ENCODE measurements at regions of chr1 and their contacts with region 1.

Region 1: DNA sequence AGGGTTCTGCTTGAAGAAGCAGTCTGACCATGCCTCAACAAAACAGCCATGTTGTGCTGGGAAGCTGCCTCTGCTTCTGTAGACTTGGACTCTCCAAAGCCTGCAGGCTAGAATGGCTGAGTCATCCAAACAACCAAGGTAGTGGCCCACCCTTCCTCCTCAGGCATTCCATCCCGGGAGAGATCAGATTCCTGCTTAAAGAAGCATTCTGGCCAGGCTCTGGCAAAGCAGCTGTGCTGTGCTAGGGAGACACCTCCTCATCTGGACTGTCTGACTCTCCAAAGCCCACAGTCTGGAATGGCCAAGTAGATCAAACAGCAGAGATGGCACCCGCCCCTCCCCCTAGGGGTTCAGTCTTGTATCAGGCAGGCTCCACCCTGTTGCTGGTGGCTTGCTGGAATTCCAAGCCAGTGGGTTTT is 38.3 kb upstream of the F3 start:
- DNase-seq: peak in 1 of 2 donors; percentile 55
- ATAC-seq: peak; percentile 62
- H3K4me3 ChIP-seq: no peak overlapping the region
- H3K27ac ChIP-seq: peak overlapping the region in 1 of 2 donors; percentile 7
- H3K4me1 ChIP-seq: peaks cover 5 to 11% of the 10 kb centered on the region in 2 donors
- H3K27me3 ChIP-seq: no peaks in the 10 kb centered on the region

Region 2: DNA sequence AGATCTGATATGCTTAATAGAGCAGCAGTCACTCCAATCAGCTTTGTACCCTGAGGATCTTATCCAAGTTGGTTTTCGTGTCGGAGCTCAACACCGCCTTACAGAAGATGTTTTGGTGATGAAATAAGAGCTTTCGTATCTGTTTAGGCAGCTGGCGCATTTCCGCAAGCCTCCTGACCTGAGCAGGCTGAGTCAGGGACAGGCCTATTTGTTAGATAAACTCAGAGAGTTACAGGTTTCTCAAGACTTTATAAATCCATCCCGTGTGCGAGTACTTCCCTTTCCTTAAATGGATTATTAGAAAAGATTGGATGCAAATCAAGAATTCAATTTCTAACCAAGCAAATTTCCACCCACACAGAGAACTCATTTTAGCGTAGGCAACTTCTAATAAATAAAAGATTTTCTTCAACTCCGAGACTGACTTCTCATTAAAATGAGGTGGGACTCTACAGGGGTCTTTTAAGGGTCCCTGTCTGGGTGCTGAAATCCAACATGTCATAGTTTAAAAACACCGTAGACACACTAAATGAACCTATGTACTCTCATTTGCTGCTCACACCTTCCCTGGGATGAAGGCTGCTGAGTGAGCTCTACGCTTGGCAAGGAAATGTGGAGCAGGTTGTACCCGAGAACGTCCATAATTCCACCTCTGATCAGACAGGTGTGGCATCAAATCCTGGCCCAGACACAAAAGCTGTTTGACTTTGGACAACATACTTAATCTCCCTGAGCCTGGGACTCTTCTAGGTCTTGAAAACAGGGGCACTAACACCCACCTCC is 68.5 kb after region 1 on chr1:
- intact Hi-C with region 1: loop called in 1 of 2 experiments (anchors 2 kb)
- DNase-seq: peak; percentile 87 to 88
- ATAC-seq: peak; percentile 79
- H3K4me3 ChIP-seq: no peak overlapping the region
- H3K27ac ChIP-seq: peak overlapping the region; percentile 45 to 64
- H3K4me1 ChIP-seq: peaks cover 0 to 6% of the 10 kb centered on the region in 2 donors
- H3K27me3 ChIP-seq: no peaks in the 10 kb centered on the region

Region 3: DNA sequence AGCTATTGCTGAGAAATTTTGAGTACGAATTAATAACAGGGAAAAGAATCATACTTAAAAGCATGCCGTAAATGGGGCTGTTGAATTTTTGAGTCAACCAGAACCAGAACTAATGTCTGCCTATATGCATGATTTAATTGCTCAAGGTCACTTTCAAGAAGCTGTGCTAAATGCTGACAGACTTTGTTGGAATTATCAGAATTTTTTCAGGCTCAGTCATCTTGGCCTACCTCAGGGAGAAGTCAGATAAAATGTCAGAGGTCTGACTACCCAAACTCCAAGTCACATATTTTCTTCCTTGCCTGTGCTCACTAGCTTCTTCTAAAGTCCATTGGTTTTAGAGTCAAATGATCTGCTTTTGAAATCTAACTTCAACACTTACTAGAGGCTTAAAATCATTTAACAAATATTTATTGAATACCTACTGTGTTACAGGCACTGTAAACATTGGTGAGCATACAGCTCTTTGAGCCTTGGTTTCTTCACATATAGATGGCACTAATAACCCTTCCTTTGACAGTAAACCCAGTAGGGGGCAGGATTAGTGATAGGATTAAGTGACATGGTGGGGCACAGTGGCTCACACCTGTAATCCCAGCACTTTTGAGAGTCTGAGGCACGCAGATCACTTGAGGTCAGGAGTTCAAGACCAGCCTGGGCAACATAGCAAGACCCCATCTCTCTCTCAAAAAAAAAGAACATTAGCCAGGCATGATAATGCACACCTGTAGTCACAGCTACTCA is 119.0 kb after region 1 on chr1:
- intact Hi-C with region 1: no loop called
- DNase-seq: no peak
- ATAC-seq: no peak
- H3K4me3 ChIP-seq: no peak overlapping the region
- H3K27ac ChIP-seq: no peak overlapping the region
- H3K4me1 ChIP-seq: no peaks in the 10 kb centered on the region
- H3K27me3 ChIP-seq: no peaks in the 10 kb centered on the region

Measured in aorta (tissue), 5 donors.